HepG2 (cell line): ENCODE measurements at regions of chr6 and their contacts with region 1.

Region 1: GRCh38 chr6:158303210-158303731 is 9.0 kb upstream of the TULP4 start:
- DNase-seq: peak; percentile 84
- ATAC-seq: peak; percentile 88
- H3K4me3 ChIP-seq: peak overlapping the region; percentile 17 to 38 (median 21); a peak in 3 of 6 replicates
- H3K27ac ChIP-seq: peak overlapping the region; percentile 77
- H3K4me1 ChIP-seq: peaks cover 79% of the 10 kb centered on the region
- H3K27me3 ChIP-seq: no peaks in the 10 kb centered on the region
- CTCF ChIP-seq: no peak
- EP300 ChIP-seq: peak in 1 of 2 experiments; percentile 76; a peak in 1 of 4 replicates
- POLR2A ChIP-seq: peak; percentile 39 to 40; a peak in 2 of 4 replicates
- RAD21 ChIP-seq: 0 out of 2 replicates have a peak, but pooled peaks have one; percentile 13

Region 2: DNA sequence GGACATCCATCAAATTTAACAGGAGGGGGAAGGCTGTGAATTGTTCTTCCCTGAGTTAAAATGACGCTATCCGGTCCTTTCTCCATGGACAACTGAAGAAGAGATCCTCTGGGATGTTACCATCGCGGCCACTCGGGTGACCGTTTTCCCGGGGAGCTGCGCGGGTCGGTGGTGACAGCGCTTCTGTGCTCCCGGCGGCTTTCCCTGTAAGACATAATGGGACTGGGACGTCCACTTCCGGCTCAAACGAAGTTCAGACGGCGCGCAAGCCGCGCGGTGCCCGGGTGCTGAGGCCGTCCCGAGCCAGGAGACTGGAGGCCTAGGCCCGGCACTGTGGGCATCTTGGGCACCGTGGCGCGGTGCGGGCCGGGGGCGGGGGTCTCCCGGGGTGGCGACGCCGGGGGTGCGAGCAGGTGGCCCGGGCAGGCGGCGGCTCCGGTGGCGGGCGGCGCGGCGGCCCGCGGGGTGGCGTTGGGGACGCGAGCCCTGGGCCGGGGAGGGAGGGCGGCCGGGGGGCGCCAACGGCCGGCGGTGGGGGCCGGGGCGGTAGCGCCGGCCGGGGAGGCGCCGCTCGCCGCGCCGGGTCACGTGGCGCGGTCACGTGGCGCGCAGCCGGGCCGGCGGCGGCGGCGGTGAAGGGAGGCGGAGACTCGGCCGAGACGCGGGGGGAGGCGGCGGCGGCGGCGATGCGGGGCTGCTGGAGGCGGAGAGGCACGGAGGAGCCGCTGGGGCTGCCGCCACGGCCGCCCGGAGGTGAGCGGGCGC is 71.5 kb before region 1 on chr6:
- CTCF ChIA-PET with region 1: no interaction called
- POLR2A ChIA-PET with region 1: interaction called, 4 read pairs
- in situ Hi-C with region 1: no loop called
- intact Hi-C with region 1: loop called (anchors 5 kb)
- DNase-seq: peak; percentile 74
- ATAC-seq: peak; percentile 71
- H3K4me3 ChIP-seq: peak overlapping the region; percentile 63 to 87 (median 78)
- H3K27ac ChIP-seq: peak overlapping the region; percentile 81
- H3K4me1 ChIP-seq: peaks cover 49% of the 10 kb centered on the region
- H3K27me3 ChIP-seq: no peaks in the 10 kb centered on the region; a peak in 1 of 5 replicates
- CTCF ChIP-seq: no peak
- EP300 ChIP-seq: no peak
- POLR2A ChIP-seq: peak; percentile 52 to 72
- RAD21 ChIP-seq: no peak

Region 3: GRCh38 chr6:158344534-158344933 is 41.3 kb after region 1 on chr6:
- CTCF ChIA-PET with region 1: no interaction called
- POLR2A ChIA-PET with region 1: no interaction called
- in situ Hi-C with region 1: no loop called
- intact Hi-C with region 1: no loop called
- DNase-seq: no peak
- ATAC-seq: no peak
- H3K4me3 ChIP-seq: no peak overlapping the region
- H3K27ac ChIP-seq: no peak overlapping the region
- H3K4me1 ChIP-seq: peaks cover 61% of the 10 kb centered on the region
- H3K27me3 ChIP-seq: no peaks in the 10 kb centered on the region
- CTCF ChIP-seq: no peak
- EP300 ChIP-seq: no peak
- POLR2A ChIP-seq: no peak
- RAD21 ChIP-seq: no peak

Region 4: GRCh38 chr6:159716247-159717096 is 1413.2 kb after region 1 on chr6:
- CTCF ChIA-PET with region 1: no interaction called
- POLR2A ChIA-PET with region 1: no interaction called
- in situ Hi-C with region 1: no loop called
- intact Hi-C with region 1: no loop called
- DNase-seq: no peak
- ATAC-seq: no peak
- H3K4me3 ChIP-seq: no peak overlapping the region
- H3K27ac ChIP-seq: no peak overlapping the region
- H3K4me1 ChIP-seq: no peaks in the 10 kb centered on the region
- H3K27me3 ChIP-seq: no peaks in the 10 kb centered on the region
- CTCF ChIP-seq: no peak
- EP300 ChIP-seq: no peak
- POLR2A ChIP-seq: no peak
- RAD21 ChIP-seq: no peak